Activated CD8-positive, alpha-beta memory T cell treated with anti-CD3 and anti-CD28 coated beads, Interleukin-2, amount 10 ng/mL, durations not matched to agents 7 days and 5 days (primary cell): ENCODE measurements at regions of chr17 and their contacts with region 1.

Region 1: DNA sequence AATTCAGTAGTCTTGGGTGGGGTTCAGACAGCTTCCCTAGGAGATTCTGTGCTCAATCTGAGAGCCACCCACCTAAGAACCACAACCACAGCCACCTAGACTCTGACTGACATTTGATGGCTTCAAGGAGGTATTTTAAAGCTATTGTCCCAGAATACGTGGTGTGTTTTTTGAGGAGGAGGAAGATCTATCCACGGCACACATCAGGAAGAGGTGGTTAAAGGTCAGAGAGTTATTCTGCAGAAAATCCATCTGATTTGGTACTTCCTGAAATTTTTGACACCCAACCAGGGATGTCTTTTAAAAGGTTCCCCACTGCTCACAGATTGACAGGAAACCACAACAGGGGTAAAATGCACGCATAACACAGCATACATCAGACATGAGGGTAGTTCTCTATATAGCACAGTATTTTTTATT is 25.1 kb downstream of the SMARCE1 start:
- DNase-seq: peak; percentile 78
- ATAC-seq: peak; percentile 64
- H3K4me3 Mint-ChIP-seq: peak overlapping the region; percentile 33
- H3K27ac Mint-ChIP-seq: peak overlapping the region; percentile 65
- H3K4me1 Mint-ChIP-seq: peaks cover 57% of the 10 kb centered on the region
- H3K27me3 Mint-ChIP-seq: no peaks in the 10 kb centered on the region

Region 2: GRCh38 chr17:40582328-40582901 is 40.1 kb before region 1 on chr17:
- CTCF ChIA-PET with region 1: no interaction called
- DNase-seq: peak; percentile 85
- ATAC-seq: peak; percentile 91
- H3K4me3 Mint-ChIP-seq: peak overlapping the region; percentile 34
- H3K27ac Mint-ChIP-seq: peak overlapping the region; percentile 79
- H3K4me1 Mint-ChIP-seq: peaks cover 59% of the 10 kb centered on the region
- H3K27me3 Mint-ChIP-seq: peaks cover 3% of the 10 kb centered on the region

Region 3: DNA sequence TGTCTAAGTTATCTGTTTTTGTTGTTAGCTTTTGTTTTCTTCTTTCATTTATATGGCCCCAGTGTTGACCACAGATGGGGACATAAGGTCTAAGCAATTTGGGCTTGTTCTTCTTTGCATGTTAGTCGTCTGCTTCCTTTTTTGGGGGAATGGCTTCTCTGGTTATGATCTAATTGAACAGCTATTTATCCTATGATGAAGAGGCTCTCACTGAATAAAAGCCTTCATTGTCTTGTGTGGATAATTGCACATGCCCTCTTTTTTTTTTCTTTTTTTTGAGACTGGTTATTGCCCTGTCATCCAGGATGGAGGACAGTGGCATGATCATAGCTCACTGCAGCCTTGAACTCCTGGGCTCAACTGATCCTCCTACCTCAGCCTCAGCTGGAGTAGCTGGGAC is 11.4 kb after region 1 on chr17:
- CTCF ChIA-PET with region 1: interaction called, 13 read pairs
- DNase-seq: no peak
- ATAC-seq: no peak
- H3K4me3 Mint-ChIP-seq: no peak overlapping the region
- H3K27ac Mint-ChIP-seq: no peak overlapping the region
- H3K4me1 Mint-ChIP-seq: peaks cover 22% of the 10 kb centered on the region
- H3K27me3 Mint-ChIP-seq: no peaks in the 10 kb centered on the region

Region 4: DNA sequence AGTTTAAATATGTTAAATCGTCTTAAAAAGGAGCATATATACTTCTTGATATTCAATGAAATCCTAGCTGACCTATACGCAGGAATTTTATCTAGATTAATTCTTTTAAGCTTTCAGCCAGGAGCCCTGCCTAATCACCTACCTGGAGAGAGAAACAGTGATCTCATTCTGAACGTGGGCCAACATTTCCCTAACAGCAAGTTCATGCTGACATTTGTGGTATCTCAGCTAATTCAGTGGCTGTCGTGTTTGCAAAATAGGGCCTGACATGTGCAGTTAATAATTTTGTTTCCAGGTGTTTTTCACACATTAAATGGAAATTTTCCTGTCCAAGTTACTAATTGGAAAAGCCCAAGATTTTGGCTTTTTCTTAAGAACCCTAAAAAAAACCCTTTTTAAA is 63.7 kb after region 1 on chr17:
- CTCF ChIA-PET with region 1: no interaction called
- DNase-seq: no peak
- ATAC-seq: no peak
- H3K4me3 Mint-ChIP-seq: no peak overlapping the region
- H3K27ac Mint-ChIP-seq: no peak overlapping the region
- H3K4me1 Mint-ChIP-seq: no peaks in the 10 kb centered on the region
- H3K27me3 Mint-ChIP-seq: peaks cover 37% of the 10 kb centered on the region